B cell (primary cell): ENCODE measurements at regions of chr11 and their contacts with region 1.

Region 1: GRCh38 chr11:128472128-128473089 is 114.9 kb downstream of the ETS1 start:
- DNase-seq: peak; percentile 57
- ATAC-seq: peak; percentile 9
- H3K4me3 ChIP-seq: peak overlapping the region in 2 of 5 experiments; percentile 15 to 54
- H3K4me3 Mint-ChIP-seq: peak overlapping the region; percentile 71
- H3K27ac ChIP-seq: peak overlapping the region; percentile 74 to 90
- H3K27ac Mint-ChIP-seq: peak overlapping the region; percentile 89
- H3K4me1 ChIP-seq: peaks cover 98 to 100% of the 10 kb centered on the region in 2 donors
- H3K4me1 Mint-ChIP-seq: peaks cover 97% of the 10 kb centered on the region
- H3K27me3 ChIP-seq: no peaks in the 10 kb centered on the region
- H3K27me3 Mint-ChIP-seq: no peaks in the 10 kb centered on the region
- CTCF ChIP-seq: no peak

Region 2: GRCh38 chr11:128251140-128251539 is 221.3 kb before region 1 on chr11:
- CTCF ChIA-PET with region 1: no interaction called
- POLR2A ChIA-PET with region 1: no interaction called
- intact Hi-C with region 1: no loop called
- DNase-seq: no peak
- ATAC-seq: no peak
- H3K4me3 ChIP-seq: no peak overlapping the region
- H3K4me3 Mint-ChIP-seq: no peak overlapping the region
- H3K27ac ChIP-seq: no peak overlapping the region
- H3K27ac Mint-ChIP-seq: no peak overlapping the region
- H3K4me1 ChIP-seq: peaks cover 0 to 14% of the 10 kb centered on the region in 2 donors
- H3K4me1 Mint-ChIP-seq: peaks cover 16% of the 10 kb centered on the region
- H3K27me3 ChIP-seq: no peaks in the 10 kb centered on the region
- H3K27me3 Mint-ChIP-seq: no peaks in the 10 kb centered on the region
- CTCF ChIP-seq: no peak

Region 3: GRCh38 chr11:128399251-128400121 is 72.9 kb before region 1 on chr11:
- CTCF ChIA-PET with region 1: no interaction called
- POLR2A ChIA-PET with region 1: no interaction called
- intact Hi-C with region 1: loop called (anchors 5 kb)
- DNase-seq: no peak
- ATAC-seq: peak; percentile 80
- H3K4me3 ChIP-seq: no peak overlapping the region
- H3K4me3 Mint-ChIP-seq: no peak overlapping the region
- H3K27ac ChIP-seq: peak overlapping the region; percentile 61 to 76
- H3K27ac Mint-ChIP-seq: peak overlapping the region; percentile 43
- H3K4me1 ChIP-seq: peaks cover 25% of the 10 kb centered on the region in 2 donors
- H3K4me1 Mint-ChIP-seq: peaks cover 36% of the 10 kb centered on the region
- H3K27me3 ChIP-seq: no peaks in the 10 kb centered on the region
- H3K27me3 Mint-ChIP-seq: no peaks in the 10 kb centered on the region
- CTCF ChIP-seq: no peak

Region 4: GRCh38 chr11:128482512-128483191 is 10.2 kb after region 1 on chr11:
- CTCF ChIA-PET with region 1: interaction called, 49 read pairs
- POLR2A ChIA-PET with region 1: interaction called, 13 read pairs
- intact Hi-C with region 1: loop called (anchors 1 kb)
- DNase-seq: no peak
- ATAC-seq: peak; percentile 13
- H3K4me3 ChIP-seq: peak overlapping the region in 2 of 5 experiments; percentile 27 to 37
- H3K4me3 Mint-ChIP-seq: peak overlapping the region; percentile 61
- H3K27ac ChIP-seq: peak overlapping the region; percentile 77 to 90
- H3K27ac Mint-ChIP-seq: peak overlapping the region; percentile 95
- H3K4me1 ChIP-seq: peaks cover 82% of the 10 kb centered on the region in 2 donors
- H3K4me1 Mint-ChIP-seq: peaks cover 92% of the 10 kb centered on the region
- H3K27me3 ChIP-seq: no peaks in the 10 kb centered on the region
- H3K27me3 Mint-ChIP-seq: no peaks in the 10 kb centered on the region
- CTCF ChIP-seq: no peak

Region 5: GRCh38 chr11:128506999-128507611 is 34.7 kb after region 1 on chr11:
- CTCF ChIA-PET with region 1: interaction called, 3 read pairs
- POLR2A ChIA-PET with region 1: no interaction called
- intact Hi-C with region 1: loop called (anchors 5 kb)
- DNase-seq: peak; percentile 39
- ATAC-seq: peak; percentile 54
- H3K4me3 ChIP-seq: peak overlapping the region in 4 of 5 experiments; percentile 8 to 41 (median 30)
- H3K4me3 Mint-ChIP-seq: peak overlapping the region; percentile 82
- H3K27ac ChIP-seq: peak overlapping the region; percentile 25 to 82
- H3K27ac Mint-ChIP-seq: peak overlapping the region; percentile 86
- H3K4me1 ChIP-seq: peaks cover 100% of the 10 kb centered on the region in 2 donors
- H3K4me1 Mint-ChIP-seq: peaks cover 98% of the 10 kb centered on the region
- H3K27me3 ChIP-seq: no peaks in the 10 kb centered on the region
- H3K27me3 Mint-ChIP-seq: no peaks in the 10 kb centered on the region
- CTCF ChIP-seq: no peak

Region 6: DNA sequence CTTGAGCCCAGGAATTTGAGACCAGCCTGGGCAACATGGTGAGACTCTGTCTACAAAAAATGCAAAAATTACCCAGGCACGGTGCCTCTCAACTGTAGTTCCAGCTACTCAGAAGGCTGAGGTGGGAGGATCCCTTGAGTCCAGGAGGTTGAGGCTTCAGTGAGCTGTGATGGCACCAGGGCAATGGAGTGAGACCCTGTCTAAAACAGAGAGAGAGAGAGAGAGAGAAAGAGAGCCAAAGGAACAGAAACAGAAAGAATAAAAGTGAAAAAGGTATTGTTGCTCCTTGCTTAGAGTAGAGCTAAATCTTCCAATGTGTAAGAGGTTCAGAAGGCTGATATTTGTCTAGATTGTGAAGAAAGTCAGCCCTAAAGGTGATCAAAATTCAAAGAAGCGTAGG is 123.8 kb after region 1 on chr11:
- CTCF ChIA-PET with region 1: no interaction called
- POLR2A ChIA-PET with region 1: no interaction called
- intact Hi-C with region 1: no loop called
- DNase-seq: peak; percentile 60
- ATAC-seq: peak; percentile 75
- H3K4me3 ChIP-seq: no peak overlapping the region
- H3K4me3 Mint-ChIP-seq: peak overlapping the region; percentile 55
- H3K27ac ChIP-seq: peak overlapping the region; percentile 26 to 73
- H3K27ac Mint-ChIP-seq: peak overlapping the region; percentile 83
- H3K4me1 ChIP-seq: peaks cover 40% of the 10 kb centered on the region in 2 donors
- H3K4me1 Mint-ChIP-seq: peaks cover 62% of the 10 kb centered on the region
- H3K27me3 ChIP-seq: no peaks in the 10 kb centered on the region
- H3K27me3 Mint-ChIP-seq: no peaks in the 10 kb centered on the region
- CTCF ChIP-seq: no peak

Region 7: DNA sequence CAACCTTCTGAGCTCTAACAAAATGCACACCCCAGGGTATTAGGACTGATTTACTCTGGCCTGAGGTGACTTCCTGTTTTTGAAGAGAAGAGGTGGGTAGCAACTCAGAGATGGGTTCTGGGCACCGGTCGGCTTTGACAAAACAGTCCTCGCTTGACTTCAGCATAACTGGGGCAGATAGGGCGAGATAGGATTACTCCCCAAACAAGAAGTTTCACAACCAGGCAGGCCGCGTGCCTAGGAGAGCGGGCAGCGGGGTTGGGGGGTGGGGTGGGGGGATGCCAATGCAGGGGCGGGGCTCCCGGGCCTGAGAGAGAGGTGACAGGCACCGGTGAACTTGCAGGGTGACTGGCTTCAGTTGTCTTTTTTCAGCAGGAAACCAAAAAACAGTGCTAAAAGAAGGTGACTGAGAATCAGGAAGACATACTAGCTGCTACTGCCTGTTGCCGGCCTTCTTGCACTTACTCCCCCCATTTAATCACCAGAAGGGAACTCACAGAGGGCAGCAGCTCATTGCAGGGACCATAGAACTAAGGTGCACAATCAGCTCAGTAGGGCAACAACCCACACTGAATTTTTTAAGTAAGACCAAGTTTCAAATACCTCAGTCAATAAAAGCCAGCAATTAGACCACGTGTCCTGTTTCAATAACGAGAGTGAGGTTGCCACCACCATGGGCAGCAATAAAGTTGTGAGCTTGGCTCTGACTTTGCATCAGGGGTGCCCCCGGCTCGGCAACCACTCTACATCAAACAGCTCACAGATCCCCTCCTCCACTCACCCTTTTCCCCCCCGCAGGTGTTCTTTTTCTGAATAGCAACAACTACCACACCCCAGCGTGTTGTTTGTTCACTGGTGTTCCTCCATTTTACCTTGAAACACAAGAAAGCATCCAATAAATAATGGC is 152.1 kb after region 1 on chr11:
- CTCF ChIA-PET with region 1: interaction called, 40 read pairs
- POLR2A ChIA-PET with region 1: interaction called, 14 read pairs
- intact Hi-C with region 1: no loop called
- DNase-seq: peak; percentile 92
- ATAC-seq: peak; percentile 85
- H3K4me3 ChIP-seq: peak overlapping the region in 2 of 5 experiments; percentile 3 to 43
- H3K4me3 Mint-ChIP-seq: peak overlapping the region; percentile 77
- H3K27ac ChIP-seq: peak overlapping the region; percentile 90 to 93
- H3K27ac Mint-ChIP-seq: peak overlapping the region; percentile 99
- H3K4me1 ChIP-seq: peaks cover 98% of the 10 kb centered on the region in 2 donors
- H3K4me1 Mint-ChIP-seq: peaks cover 96% of the 10 kb centered on the region
- H3K27me3 ChIP-seq: no peaks in the 10 kb centered on the region
- H3K27me3 Mint-ChIP-seq: no peaks in the 10 kb centered on the region
- CTCF ChIP-seq: no peak

Region 8: GRCh38 chr11:128841461-128842072 is 369.2 kb after region 1 on chr11:
- CTCF ChIA-PET with region 1: interaction called, 4 read pairs
- POLR2A ChIA-PET with region 1: no interaction called
- intact Hi-C with region 1: loop called (anchors 2 kb)
- DNase-seq: peak; percentile 84
- ATAC-seq: peak; percentile 77
- H3K4me3 ChIP-seq: peak overlapping the region in 1 of 5 experiments; percentile 8
- H3K4me3 Mint-ChIP-seq: peak overlapping the region; percentile 70
- H3K27ac ChIP-seq: peak overlapping the region; percentile 94 to 95
- H3K27ac Mint-ChIP-seq: peak overlapping the region; percentile 95
- H3K4me1 ChIP-seq: peaks cover 96 to 100% of the 10 kb centered on the region in 2 donors
- H3K4me1 Mint-ChIP-seq: peaks cover 97% of the 10 kb centered on the region
- H3K27me3 ChIP-seq: no peaks in the 10 kb centered on the region
- H3K27me3 Mint-ChIP-seq: no peaks in the 10 kb centered on the region
- CTCF ChIP-seq: no peak